Psoas muscle (tissue), 8 donors: ENCODE measurements at regions of chr2 and their contacts with region 1.

Region 1: DNA sequence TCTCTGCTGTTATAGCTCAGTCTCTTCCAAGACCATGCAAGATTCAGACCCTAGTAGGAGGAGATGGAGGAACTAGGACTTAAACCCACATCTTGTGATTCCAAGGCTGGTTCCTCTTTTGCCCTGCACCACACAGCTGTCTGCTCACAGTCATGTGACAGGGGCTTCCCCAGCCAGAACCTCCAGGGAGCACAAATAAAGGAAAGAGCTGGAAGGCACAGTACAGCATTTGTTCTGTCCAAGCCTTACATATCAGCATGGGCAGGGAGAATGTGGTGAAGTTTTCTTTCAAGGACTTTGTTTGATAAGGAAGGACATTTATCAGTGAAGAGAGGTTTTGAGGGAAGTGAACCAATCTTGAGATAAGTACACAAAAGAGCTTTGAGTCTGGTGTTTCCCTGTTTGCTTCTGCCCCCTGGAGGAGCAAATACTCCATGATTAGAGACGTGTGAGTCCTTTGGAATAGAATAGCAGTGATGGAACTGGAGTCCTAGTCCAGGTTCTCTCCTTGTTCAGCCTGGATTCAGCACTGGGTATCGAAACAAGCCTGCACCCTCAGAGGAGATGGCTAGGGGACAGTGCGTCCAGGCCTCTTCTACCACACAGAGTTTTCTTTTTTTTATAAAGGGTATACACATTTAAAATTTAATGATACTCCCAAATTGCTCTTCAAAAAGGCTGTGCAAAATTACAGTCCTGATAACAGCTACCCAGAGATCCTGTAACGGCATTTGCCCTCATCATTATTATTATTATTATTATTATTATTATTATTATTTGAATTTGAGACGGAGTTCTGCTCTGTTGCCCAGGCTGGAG is 24.6 kb upstream of the CASP10 start:
- DNase-seq: no peak
- ATAC-seq: peak; percentile 30 to 40 (median 36)
- H3K4me3 ChIP-seq: no peak overlapping the region
- H3K27ac ChIP-seq: peak overlapping the region; percentile 59
- H3K4me1 ChIP-seq: peaks cover 13% of the 10 kb centered on the region
- H3K27me3 ChIP-seq: no peaks in the 10 kb centered on the region
- CTCF ChIP-seq: peak; percentile 43

Region 2: GRCh38 chr2:201071479-201072200 is 86.7 kb before region 1 on chr2 and contains the starts of genes HYCC2 and NDUFB3:
- intact Hi-C with region 1: loop called in 1 of 2 experiments (anchors 10 kb)
- DNase-seq: peak; percentile 87 to 95
- ATAC-seq: peak; percentile 98 to 100 (median 99)
- H3K4me3 ChIP-seq: peak within 1 kb of the TSS; percentile 92
- H3K27ac ChIP-seq: peak within 1 kb of the TSS; percentile 95
- H3K4me1 ChIP-seq: peaks cover 55% of the 10 kb centered on the region
- H3K27me3 ChIP-seq: no peaks in the 10 kb centered on the region
- CTCF ChIP-seq: peak; percentile 36
- total RNA-seq, gene HYCC2: 7.6 to 8.6 (median 8.1) TPM
- total RNA-seq, gene NDUFB3: 188 to 271 (median 261) TPM

Region 3: GRCh38 chr2:201100497-201100896 is 57.8 kb before region 1 on chr2:
- intact Hi-C with region 1: no loop called
- DNase-seq: no peak
- ATAC-seq: no peak
- H3K4me3 ChIP-seq: no peak overlapping the region
- H3K27ac ChIP-seq: no peak overlapping the region
- H3K4me1 ChIP-seq: no peaks in the 10 kb centered on the region
- H3K27me3 ChIP-seq: no peaks in the 10 kb centered on the region
- CTCF ChIP-seq: no peak

Region 4: DNA sequence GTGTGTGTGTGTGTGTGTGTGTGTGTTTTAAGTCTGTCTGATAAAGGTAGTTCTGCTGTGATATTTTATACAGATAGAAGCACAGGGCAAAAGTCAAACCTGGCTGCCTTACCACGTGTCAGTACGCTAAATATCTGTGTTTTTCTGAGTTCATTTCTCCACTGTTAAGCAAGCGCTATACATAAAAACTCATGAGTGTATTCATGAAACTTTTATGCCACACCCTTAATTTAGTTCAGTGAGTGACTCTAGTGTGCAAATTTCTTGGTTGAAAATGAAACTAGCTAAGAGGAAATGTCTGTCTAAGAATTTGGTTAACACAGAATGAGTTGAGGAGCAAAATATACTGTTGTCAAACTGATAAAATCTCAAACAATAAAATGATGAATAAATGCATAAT is 35.8 kb after region 1 on chr2:
- intact Hi-C with region 1: no loop called
- DNase-seq: no peak
- ATAC-seq: no peak
- H3K4me3 ChIP-seq: no peak overlapping the region
- H3K27ac ChIP-seq: no peak overlapping the region
- H3K4me1 ChIP-seq: no peaks in the 10 kb centered on the region
- H3K27me3 ChIP-seq: no peaks in the 10 kb centered on the region
- CTCF ChIP-seq: no peak

Region 5: GRCh38 chr2:201440182-201440581 is 281.9 kb after region 1 on chr2:
- intact Hi-C with region 1: no loop called
- DNase-seq: no peak
- ATAC-seq: no peak
- H3K4me3 ChIP-seq: no peak overlapping the region
- H3K27ac ChIP-seq: no peak overlapping the region
- H3K4me1 ChIP-seq: peaks cover 9% of the 10 kb centered on the region
- H3K27me3 ChIP-seq: no peaks in the 10 kb centered on the region
- CTCF ChIP-seq: no peak